Aorta (tissue), 5 donors: ENCODE measurements at regions of chr1 and their contacts with region 1.

Region 1: GRCh38 chr1:160205242-160206035 is at the start of gene PEA15:
- DNase-seq: peak; percentile 83 to 95
- ATAC-seq: peak; percentile 90
- H3K4me3 ChIP-seq: peak within 1 kb of the TSS; percentile 77 to 79
- H3K27ac ChIP-seq: peak within 1 kb of the TSS; percentile 84 to 98
- H3K4me1 ChIP-seq: peaks cover 5 to 7% of the 10 kb centered on the region in 2 donors
- H3K27me3 ChIP-seq: no peaks in the 10 kb centered on the region
- total RNA-seq, gene PEA15: 258 to 313 TPM

Region 2: GRCh38 chr1:159790237-159790917 is 415.1 kb before region 1 on chr1:
- intact Hi-C with region 1: no loop called
- DNase-seq: no peak
- ATAC-seq: peak; percentile 34
- H3K4me3 ChIP-seq: no peak overlapping the region
- H3K27ac ChIP-seq: no peak overlapping the region
- H3K4me1 ChIP-seq: no peaks in the 10 kb centered on the region
- H3K27me3 ChIP-seq: no peaks in the 10 kb centered on the region

Region 3: GRCh38 chr1:160137216-160137862 is 68.1 kb before region 1 on chr1:
- intact Hi-C with region 1: no loop called
- DNase-seq: peak in 1 of 2 donors; percentile 37
- ATAC-seq: no peak
- H3K4me3 ChIP-seq: no peak overlapping the region
- H3K27ac ChIP-seq: peak overlapping the region; percentile 4 to 52
- H3K4me1 ChIP-seq: peaks cover 0 to 4% of the 10 kb centered on the region in 2 donors
- H3K27me3 ChIP-seq: no peaks in the 10 kb centered on the region

Region 4: DNA sequence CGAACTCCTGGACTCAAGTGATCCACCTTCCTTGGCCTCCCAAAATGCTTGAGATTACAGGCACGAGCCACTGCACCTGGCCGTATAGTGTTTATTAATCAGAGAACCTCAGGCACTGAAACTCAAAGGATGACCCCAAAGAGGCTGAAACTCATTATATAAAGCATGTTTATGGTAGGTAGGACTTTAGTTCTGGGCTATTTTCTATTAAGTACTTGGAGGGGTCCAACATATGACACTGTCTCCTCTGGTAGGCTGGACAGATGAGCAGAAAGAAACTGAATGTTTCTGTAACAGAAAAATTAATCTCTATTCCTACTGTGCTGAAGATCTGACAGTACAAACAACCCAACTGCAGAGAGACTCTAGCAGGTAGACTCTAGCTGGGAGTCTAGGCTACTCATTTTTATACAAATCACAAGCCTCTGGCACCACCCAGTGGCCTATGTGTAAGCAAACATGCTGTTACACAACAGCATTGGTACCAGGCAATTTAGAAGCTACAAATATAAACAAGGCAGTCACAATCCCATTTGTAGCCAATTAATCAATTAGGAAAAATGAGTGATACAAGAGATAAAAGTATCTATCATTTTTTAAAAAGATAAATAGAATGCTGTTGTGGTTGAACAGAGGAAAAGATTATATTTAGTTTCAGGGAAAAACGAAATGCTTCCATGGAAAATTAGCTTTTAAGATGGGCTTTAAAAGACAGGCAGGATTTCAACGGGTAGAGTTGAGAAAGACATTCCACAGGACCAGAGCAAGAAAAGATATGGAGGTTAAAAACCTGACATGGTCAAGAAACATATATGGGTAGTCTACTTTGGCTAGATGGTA is 46.5 kb after region 1 on chr1:
- intact Hi-C with region 1: loop called in 1 of 2 experiments (anchors 5 kb)
- DNase-seq: peak in 1 of 2 donors; percentile 68
- ATAC-seq: peak; percentile 91
- H3K4me3 ChIP-seq: no peak overlapping the region
- H3K27ac ChIP-seq: no peak overlapping the region
- H3K4me1 ChIP-seq: no peaks in the 10 kb centered on the region
- H3K27me3 ChIP-seq: no peaks in the 10 kb centered on the region

Region 5: DNA sequence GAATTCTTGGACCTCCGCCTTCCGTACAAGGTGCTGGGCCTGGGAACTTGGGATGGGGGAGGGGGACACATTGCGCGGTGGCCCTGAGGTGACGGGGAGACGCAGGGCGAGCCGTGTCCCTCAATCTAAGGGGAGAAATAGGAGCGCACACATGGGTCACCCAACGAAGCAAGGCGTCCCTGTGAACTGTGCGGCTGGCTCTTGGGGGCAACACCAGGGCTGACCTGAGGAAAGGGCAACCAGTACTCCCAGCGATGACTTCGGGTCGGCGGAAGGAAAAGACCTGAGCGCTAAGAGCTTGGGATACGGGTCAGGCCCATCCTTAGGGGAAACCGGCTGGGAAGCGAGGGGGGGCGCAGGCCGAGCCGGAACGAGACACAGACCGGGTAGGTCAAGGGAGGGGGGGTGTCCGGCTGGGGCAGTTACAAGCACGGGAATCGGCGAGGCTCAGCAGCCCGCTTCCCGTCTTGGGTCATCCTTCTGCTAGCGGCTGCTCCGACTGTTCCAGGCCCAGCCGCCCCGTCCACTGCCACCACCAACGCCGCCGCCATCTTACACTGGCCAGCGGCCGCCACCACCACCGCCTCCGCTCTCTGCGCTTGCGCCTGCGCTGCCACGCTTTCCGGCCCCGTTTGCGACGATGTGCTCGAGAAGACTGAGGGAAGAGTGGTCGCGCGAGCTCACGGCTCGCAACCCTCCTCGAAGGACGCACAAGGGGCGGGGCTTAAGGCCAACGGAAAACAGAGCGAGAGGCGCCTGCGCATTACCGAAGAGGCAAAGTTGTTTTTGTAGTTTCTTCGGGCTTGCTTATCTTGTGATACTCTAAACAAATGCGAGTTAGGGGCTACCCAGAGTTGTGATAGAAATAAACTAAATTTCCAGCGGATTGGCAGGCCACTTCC is 56.7 kb after region 1 on chr1 and contains the start of gene DCAF8:
- intact Hi-C with region 1: loop called in 1 of 2 experiments (anchors 5 kb)
- DNase-seq: peak; percentile 99 to 100
- ATAC-seq: peak; percentile 99
- H3K4me3 ChIP-seq: peak within 1 kb of the TSS; percentile 69 to 93
- H3K27ac ChIP-seq: peak within 1 kb of the TSS; percentile 72 to 87
- H3K4me1 ChIP-seq: peaks cover 0 to 7% of the 10 kb centered on the region in 2 donors
- H3K27me3 ChIP-seq: no peaks in the 10 kb centered on the region
- total RNA-seq, gene DCAF8: 134 to 152 TPM

Region 6: DNA sequence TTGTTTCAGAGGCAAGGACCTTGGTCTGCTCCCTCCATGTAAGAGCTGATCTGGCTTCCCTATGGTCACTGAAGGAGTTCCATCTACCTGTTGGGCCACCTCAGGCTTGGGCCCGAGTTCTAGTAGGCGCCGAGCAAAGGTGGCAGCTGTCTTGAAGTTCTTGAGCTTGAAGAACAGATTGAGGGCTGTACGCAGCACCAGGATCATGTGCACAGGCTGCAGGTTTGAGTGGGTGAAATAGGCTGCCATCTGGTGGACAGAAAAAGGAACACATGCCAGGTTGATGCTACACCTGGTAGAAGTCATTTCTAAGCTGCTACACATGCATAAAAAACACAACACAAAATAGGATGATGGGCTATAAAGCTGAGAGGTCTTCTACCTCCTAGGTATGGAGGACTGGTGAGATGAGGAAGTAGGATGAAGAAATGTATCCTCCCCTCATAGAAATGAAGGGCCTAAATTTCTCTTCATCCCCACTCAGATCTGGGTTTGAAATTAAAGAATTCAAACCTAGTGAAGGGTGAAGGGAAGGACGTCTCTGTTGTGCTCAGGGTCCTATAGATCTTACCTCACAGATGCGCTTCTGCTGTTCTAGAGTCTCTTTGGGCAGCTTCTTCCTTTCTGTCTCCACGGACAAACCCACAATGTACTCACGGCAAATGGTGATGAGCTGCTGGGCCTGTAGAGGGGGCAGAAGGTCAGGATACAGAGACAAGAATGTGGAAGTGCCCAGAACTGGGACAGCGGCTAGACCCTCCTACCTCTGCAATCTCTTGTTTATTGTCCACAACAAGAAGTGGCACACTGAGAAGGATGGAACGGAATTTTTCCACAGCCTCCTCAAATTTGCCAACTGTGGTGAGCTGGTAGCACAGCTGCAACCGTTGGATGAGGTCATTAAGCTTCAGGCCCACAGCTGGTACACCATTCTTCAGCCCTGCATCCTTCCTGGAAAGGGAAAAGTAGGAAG is 86.1 kb after region 1 on chr1:
- intact Hi-C with region 1: no loop called
- DNase-seq: peak in 1 of 2 donors; percentile 61
- ATAC-seq: peak; percentile 83
- H3K4me3 ChIP-seq: no peak overlapping the region
- H3K27ac ChIP-seq: peak overlapping the region in 1 of 2 donors; percentile 25
- H3K4me1 ChIP-seq: no peaks in the 10 kb centered on the region
- H3K27me3 ChIP-seq: no peaks in the 10 kb centered on the region